ENCODE measurements at regions of chr12 and their contacts with region 1.

Region 1: GRCh38 chr12:18320036-18320617 is 58.8 kb downstream of the PIK3C2G start:
- DNase-seq: peak; percentile 84
- H3K4me3 Mint-ChIP-seq: peak overlapping the region; percentile 21
- H3K27ac Mint-ChIP-seq: peak overlapping the region; percentile 5
- H3K4me1 Mint-ChIP-seq: peaks cover 14% of the 10 kb centered on the region
- H3K27me3 Mint-ChIP-seq: no peaks in the 10 kb centered on the region
- CTCF ChIP-seq: peak; percentile 44

Region 2: GRCh38 chr12:18250313-18250916 is 69.7 kb before region 1 on chr12:
- CTCF ChIA-PET with region 1: interaction called, 120 read pairs
- POLR2A ChIA-PET with region 1: interaction called, 20 read pairs
- intact Hi-C with region 1: loop called (anchors 1 kb)
- DNase-seq: peak; percentile 73
- H3K4me3 Mint-ChIP-seq: no peak overlapping the region
- H3K27ac Mint-ChIP-seq: no peak overlapping the region
- H3K4me1 Mint-ChIP-seq: no peaks in the 10 kb centered on the region
- H3K27me3 Mint-ChIP-seq: no peaks in the 10 kb centered on the region
- CTCF ChIP-seq: peak; percentile 56

Region 3: DNA sequence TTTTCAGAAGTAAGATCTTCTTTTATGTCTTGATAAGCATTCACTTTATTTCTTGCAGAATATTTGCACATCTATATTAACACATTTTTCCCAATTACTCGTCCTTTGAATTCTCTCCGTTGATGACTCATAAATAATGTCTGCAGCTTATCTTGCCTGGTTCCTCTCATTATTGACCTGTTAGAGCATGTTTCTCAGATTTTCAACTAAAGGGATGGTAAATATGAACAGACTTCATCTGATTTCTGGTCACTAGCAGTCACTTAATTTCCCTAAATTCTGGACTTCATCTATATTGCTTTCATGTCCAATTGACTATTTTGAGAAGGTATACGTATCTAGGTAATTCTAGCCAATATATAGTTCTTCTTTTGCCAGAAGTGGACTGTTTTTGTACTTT is 52.7 kb before region 1 on chr12:
- CTCF ChIA-PET with region 1: interaction called, 45 read pairs
- POLR2A ChIA-PET with region 1: interaction called, 41 read pairs
- intact Hi-C with region 1: loop called (anchors 1 kb)
- DNase-seq: peak; percentile 56
- H3K4me3 Mint-ChIP-seq: peak overlapping the region; percentile 76
- H3K27ac Mint-ChIP-seq: peak overlapping the region; percentile 100
- H3K4me1 Mint-ChIP-seq: peaks cover 11% of the 10 kb centered on the region
- H3K27me3 Mint-ChIP-seq: no peaks in the 10 kb centered on the region
- CTCF ChIP-seq: no peak

Region 4: DNA sequence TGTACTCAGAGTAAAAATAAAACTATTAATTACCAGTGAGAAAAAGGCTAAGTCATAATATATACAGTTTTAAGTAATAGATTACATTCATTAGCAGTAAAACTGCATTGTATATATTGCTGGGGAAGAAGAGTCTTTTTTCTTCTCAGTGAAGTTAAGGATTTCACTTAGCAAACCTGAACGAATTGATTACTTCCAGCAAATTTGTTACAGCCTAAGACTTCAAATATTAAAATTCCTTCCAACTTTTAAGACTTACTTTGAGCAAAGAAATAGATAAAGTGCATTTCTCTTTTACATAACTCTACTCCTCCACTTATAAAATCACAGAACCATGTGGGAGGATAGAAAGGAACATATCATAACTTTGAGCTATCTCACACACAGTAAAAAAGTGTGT is 15.5 kb before region 1 on chr12:
- CTCF ChIA-PET with region 1: interaction called, 17 read pairs
- POLR2A ChIA-PET with region 1: interaction called, 17 read pairs
- intact Hi-C with region 1: no loop called
- DNase-seq: no peak
- H3K4me3 Mint-ChIP-seq: no peak overlapping the region
- H3K27ac Mint-ChIP-seq: no peak overlapping the region
- H3K4me1 Mint-ChIP-seq: peaks cover 5% of the 10 kb centered on the region
- H3K27me3 Mint-ChIP-seq: no peaks in the 10 kb centered on the region
- CTCF ChIP-seq: no peak

Region 5: DNA sequence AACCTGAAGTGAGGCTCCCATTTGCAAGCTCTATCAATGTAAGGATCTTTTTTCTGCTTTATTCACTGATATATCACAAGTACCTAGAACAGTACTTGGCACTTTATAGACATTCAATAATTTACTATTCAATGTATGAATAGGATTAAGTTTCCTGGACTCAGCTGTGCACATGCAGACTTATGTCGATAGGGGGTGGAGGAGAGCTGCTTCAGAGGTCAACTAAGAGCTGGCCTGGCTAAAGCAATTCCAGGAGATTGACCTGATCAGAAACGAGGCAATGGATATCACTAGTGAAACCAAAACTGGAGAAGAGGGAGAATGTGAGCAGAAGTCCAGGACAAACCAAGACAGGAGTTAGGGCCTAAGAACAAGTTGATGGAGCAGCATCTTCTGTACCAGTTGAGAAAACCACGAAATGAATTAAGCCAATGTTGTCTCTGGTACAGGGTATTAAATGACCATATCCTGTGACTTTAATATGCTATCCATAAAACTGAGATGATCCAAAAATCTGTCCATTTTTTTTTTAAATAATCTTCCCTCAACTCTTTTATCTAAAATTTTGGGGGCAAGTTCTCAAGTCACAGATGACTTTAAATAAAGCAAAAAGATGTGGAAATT is 110.4 kb after region 1 on chr12:
- CTCF ChIA-PET with region 1: no interaction called
- POLR2A ChIA-PET with region 1: no interaction called
- intact Hi-C with region 1: no loop called
- DNase-seq: peak; percentile 70
- H3K4me3 Mint-ChIP-seq: no peak overlapping the region
- H3K27ac Mint-ChIP-seq: no peak overlapping the region
- H3K4me1 Mint-ChIP-seq: peaks cover 10% of the 10 kb centered on the region
- H3K27me3 Mint-ChIP-seq: no peaks in the 10 kb centered on the region
- CTCF ChIP-seq: peak; percentile 91